Activated B cell treated with CpG ODN at 0.5 μM for 24 hours (primary cell): ENCODE measurements at regions of chr1 and their contacts with region 1.

Region 1: DNA sequence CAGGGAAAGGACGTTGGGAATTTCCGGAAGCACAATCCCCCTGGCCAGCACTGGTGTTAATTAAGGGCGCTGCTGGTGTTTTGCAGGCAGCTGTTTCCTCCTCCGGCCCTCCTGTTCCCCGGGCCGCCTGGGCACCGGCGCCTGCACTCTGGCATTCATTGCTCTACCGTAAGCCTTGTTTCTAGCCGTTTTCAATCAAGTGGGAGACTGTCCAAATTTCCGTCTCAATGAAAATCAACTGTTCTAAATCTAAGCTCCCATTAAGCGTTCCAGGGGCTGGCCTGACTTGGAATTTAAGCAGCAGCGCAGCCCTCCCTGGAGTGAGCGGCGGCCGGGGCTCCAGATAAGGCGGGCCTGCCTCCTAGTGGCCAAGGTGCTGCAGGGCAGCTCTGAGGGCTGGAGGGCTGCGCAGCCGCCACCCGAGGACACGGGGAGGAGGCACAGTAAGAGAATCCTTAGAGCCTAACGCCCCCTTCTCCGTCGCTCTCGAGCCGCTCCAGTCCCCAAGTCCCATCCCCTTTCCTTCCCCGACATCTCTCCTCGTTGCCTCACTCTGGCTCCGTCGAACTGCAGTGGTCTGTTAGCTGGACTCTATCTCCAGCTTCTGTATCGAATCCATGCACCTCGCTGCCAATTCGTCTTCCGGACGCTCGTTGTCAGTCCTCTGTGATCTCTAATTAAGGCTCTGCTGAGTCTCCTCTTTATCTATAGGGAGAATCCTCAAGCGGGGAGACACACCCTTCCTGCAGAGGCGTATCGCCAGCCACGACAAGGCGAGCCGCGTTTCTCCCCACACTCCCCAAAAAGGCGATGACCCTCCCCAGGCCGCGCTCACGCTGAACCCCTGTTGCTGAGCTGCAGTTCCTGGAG is 57.8 kb upstream of the LRRC8D start:
- DNase-seq: peak; percentile 79
- ATAC-seq: peak; percentile 100
- H3K4me3 Mint-ChIP-seq: peak overlapping the region; percentile 87
- H3K27ac Mint-ChIP-seq: peak overlapping the region; percentile 70
- H3K4me1 Mint-ChIP-seq: peaks cover 18% of the 10 kb centered on the region
- H3K27me3 Mint-ChIP-seq: peaks cover 4% of the 10 kb centered on the region
- CTCF ChIP-seq: peak; percentile 52

Region 2: GRCh38 chr1:88998716-88999115 is 764.3 kb before region 1 on chr1:
- CTCF ChIA-PET with region 1: no interaction called
- POLR2A ChIA-PET with region 1: no interaction called
- intact Hi-C with region 1: loop called (anchors 1 kb)
- DNase-seq: no peak
- ATAC-seq: peak; percentile 88
- H3K4me3 Mint-ChIP-seq: no peak overlapping the region
- H3K27ac Mint-ChIP-seq: no peak overlapping the region
- H3K4me1 Mint-ChIP-seq: peaks cover 6% of the 10 kb centered on the region
- H3K27me3 Mint-ChIP-seq: no peaks in the 10 kb centered on the region
- CTCF ChIP-seq: no peak

Region 3: GRCh38 chr1:89598450-89599331 is 164.3 kb before region 1 on chr1:
- CTCF ChIA-PET with region 1: interaction called, 49 read pairs
- POLR2A ChIA-PET with region 1: no interaction called
- intact Hi-C with region 1: loop called (anchors 1 kb)
- DNase-seq: no peak
- ATAC-seq: peak; percentile 62
- H3K4me3 Mint-ChIP-seq: no peak overlapping the region
- H3K27ac Mint-ChIP-seq: no peak overlapping the region
- H3K4me1 Mint-ChIP-seq: peaks cover 4% of the 10 kb centered on the region
- H3K27me3 Mint-ChIP-seq: no peaks in the 10 kb centered on the region
- CTCF ChIP-seq: peak; percentile 24

Region 4: GRCh38 chr1:89622895-89623294 is 140.1 kb before region 1 on chr1:
- CTCF ChIA-PET with region 1: interaction called, 193 read pairs
- POLR2A ChIA-PET with region 1: interaction called, 3 read pairs
- intact Hi-C with region 1: no loop called
- DNase-seq: no peak
- ATAC-seq: no peak
- H3K4me3 Mint-ChIP-seq: no peak overlapping the region
- H3K27ac Mint-ChIP-seq: no peak overlapping the region
- H3K4me1 Mint-ChIP-seq: peaks cover 11% of the 10 kb centered on the region
- H3K27me3 Mint-ChIP-seq: no peaks in the 10 kb centered on the region
- CTCF ChIP-seq: no peak

Region 5: GRCh38 chr1:89692601-89693521 is 70.2 kb before region 1 on chr1:
- CTCF ChIA-PET with region 1: interaction called, 19 read pairs
- POLR2A ChIA-PET with region 1: no interaction called
- intact Hi-C with region 1: loop called (anchors 1 kb)
- DNase-seq: no peak
- ATAC-seq: peak; percentile 79
- H3K4me3 Mint-ChIP-seq: peak overlapping the region; percentile 44
- H3K27ac Mint-ChIP-seq: peak overlapping the region; percentile 80
- H3K4me1 Mint-ChIP-seq: peaks cover 59% of the 10 kb centered on the region
- H3K27me3 Mint-ChIP-seq: no peaks in the 10 kb centered on the region
- CTCF ChIP-seq: no peak

Region 6: DNA sequence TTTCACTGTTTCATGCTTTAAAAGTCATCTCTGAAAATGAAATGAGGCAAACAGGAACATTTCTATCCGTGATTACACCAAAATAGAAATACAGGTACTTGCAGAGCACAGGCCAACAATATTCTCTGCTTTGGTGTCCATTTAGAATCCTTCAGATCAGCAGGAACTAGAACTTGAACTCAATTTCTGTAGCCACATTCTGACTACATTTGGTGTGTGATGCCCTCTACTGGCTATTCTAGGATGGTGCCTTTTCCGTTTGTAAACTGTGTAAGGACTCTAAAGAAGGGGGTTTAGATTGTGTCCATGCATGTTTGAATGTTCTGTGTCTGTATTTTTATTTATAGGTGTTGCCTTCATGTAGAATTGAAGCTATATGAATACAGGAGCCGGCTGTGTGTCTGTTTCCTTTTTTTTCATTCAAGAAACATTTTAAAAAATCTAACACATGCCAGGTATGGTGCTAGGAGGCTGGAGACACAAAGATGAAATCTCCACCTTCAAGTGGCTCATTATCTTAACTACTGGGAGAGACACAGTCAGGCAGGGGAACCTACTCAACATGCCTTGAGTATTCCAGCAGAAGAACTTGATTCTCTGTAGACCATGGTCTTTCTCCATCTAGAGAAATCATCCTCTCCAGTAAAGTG is 224.3 kb after region 1 on chr1:
- CTCF ChIA-PET with region 1: interaction called, 4 read pairs
- POLR2A ChIA-PET with region 1: no interaction called
- intact Hi-C with region 1: loop called (anchors 1 kb)
- DNase-seq: no peak
- ATAC-seq: peak; percentile 74
- H3K4me3 Mint-ChIP-seq: no peak overlapping the region
- H3K27ac Mint-ChIP-seq: no peak overlapping the region
- H3K4me1 Mint-ChIP-seq: no peaks in the 10 kb centered on the region
- H3K27me3 Mint-ChIP-seq: no peaks in the 10 kb centered on the region
- CTCF ChIP-seq: peak; percentile 60